Naive thymus-derived CD8-positive, alpha-beta T cell (primary cell): ENCODE measurements at regions of chr22 and their contacts with region 1.

Region 1: DNA sequence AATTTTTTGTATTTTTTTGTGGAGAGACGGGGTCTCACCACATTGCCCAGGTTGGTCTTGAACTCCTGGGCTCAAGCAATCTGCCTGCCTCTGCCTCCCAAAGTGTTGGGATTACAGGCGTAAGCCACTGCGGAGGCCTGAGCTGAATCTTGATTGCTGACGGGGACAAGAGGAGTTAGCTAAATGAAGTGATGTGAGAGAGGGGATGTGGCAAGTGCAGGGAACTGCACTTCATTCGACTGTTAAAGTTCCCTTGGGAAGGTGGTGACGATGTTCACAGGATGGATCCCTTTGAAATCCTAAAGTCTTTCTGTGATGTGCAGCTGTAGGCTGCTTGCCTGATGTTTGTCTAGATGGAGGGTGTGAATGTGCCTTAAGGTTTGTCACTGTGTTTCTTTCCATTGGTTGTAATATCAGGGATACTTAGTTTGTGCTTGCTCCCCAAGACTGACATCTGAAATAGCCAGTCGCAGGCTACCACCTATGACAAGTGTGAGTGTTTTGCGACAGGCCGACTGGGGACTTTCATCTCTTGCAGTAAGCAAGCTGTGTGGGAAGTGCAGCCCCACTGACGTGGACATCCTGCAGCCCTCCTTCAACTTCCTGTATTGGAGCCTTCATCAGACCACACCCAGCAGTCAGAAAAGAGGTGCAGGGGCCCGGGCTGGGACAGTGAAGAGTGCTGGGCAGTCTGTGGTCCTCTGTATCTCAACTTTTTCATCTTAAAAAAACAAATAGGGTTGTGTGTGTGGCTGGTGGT is 19.6 kb upstream of the CCDC134 start:
- DNase-seq: peak; percentile 69 to 98 (median 92)
- ATAC-seq: peak; percentile 95
- H3K4me3 Mint-ChIP-seq: peak overlapping the region; percentile 80 to 93 (median 87)
- H3K27ac Mint-ChIP-seq: peak overlapping the region; percentile 98 to 100 (median 99)
- H3K4me1 Mint-ChIP-seq: peaks cover 29 to 69% (median 56%) of the 10 kb centered on the region in 4 donors
- H3K27me3 Mint-ChIP-seq: no peaks in the 10 kb centered on the region

Region 2: GRCh38 chr22:41746567-41747400 is 34.1 kb before region 1 on chr22:
- POLR2A ChIA-PET with region 1: interaction called, 16 read pairs
- DNase-seq: peak; percentile 16 to 77 (median 50)
- ATAC-seq: peak; percentile 81 to 98
- H3K4me3 Mint-ChIP-seq: no peak overlapping the region
- H3K27ac Mint-ChIP-seq: peak overlapping the region in 1 of 10 donors; percentile 6
- H3K4me1 Mint-ChIP-seq: peaks cover 0 to 13% (median 4%) of the 10 kb centered on the region in 4 donors
- H3K27me3 Mint-ChIP-seq: peaks cover 2 to 14% (median 10%) of the 10 kb centered on the region in 5 donors

Region 3: GRCh38 chr22:41758231-41758630 is 22.7 kb before region 1 on chr22:
- POLR2A ChIA-PET with region 1: no interaction called
- DNase-seq: no peak
- ATAC-seq: no peak
- H3K4me3 Mint-ChIP-seq: no peak overlapping the region
- H3K27ac Mint-ChIP-seq: no peak overlapping the region
- H3K4me1 Mint-ChIP-seq: no peaks in the 10 kb centered on the region
- H3K27me3 Mint-ChIP-seq: no peaks in the 10 kb centered on the region

Region 4: DNA sequence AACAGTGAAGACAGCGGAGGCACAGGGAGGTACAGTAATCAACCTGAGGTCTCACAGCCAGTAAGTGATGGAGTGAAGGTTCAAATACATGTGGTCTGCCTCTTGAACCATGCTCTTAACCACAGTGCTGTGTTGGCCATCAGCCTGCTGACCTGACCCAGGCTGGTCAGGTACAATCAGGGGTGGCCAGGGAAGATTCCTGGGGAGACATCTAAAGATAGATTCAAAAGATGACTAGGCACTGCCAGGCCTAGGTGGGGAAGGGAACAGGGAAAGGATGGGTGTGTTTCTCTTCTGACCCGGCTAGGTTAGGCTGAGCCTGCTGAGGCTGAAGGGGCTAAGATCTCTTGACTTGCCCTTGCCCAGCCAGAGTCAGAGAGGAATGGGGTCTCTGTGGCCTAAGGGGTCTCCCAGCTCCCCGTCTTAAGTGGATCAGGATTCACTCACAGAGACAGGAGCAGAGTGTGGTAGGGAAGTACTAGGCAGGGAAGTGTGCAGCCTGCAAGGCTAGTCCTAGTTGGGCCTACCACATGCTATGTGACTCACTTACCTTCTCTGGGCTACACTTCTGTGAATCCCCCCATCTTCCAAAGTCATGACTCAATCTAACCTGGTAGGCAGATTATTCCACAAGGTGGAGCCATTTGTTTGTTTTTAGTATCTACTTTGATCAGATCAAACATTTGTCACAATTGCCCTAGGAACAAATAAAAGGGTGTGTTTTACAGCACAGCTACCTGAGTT is 41.6 kb after region 1 on chr22:
- POLR2A ChIA-PET with region 1: no interaction called
- DNase-seq: peak in 8 of 10 donors; percentile 17 to 76 (median 60)
- ATAC-seq: peak; percentile 93 to 96
- H3K4me3 Mint-ChIP-seq: no peak overlapping the region
- H3K27ac Mint-ChIP-seq: peak overlapping the region; percentile 67 to 90 (median 80)
- H3K4me1 Mint-ChIP-seq: peaks cover 9 to 18% (median 14%) of the 10 kb centered on the region in 4 donors
- H3K27me3 Mint-ChIP-seq: no peaks in the 10 kb centered on the region

Region 5: GRCh38 chr22:41888627-41889200 is 107.8 kb after region 1 on chr22:
- POLR2A ChIA-PET with region 1: no interaction called
- DNase-seq: no peak
- ATAC-seq: no peak
- H3K4me3 Mint-ChIP-seq: no peak overlapping the region
- H3K27ac Mint-ChIP-seq: peak overlapping the region in 1 of 10 donors; percentile 11
- H3K4me1 Mint-ChIP-seq: peaks cover 0 to 6% (median 1%) of the 10 kb centered on the region in 4 donors
- H3K27me3 Mint-ChIP-seq: no peaks in the 10 kb centered on the region